ENCODE measurements at regions of chr11 and their contacts with region 1.

Region 1: GRCh38 chr11:13668102-13668956 is at the start of gene FAR1:
- DNase-seq: peak; percentile 93
- ATAC-seq: peak; percentile 91
- H3K4me3 Mint-ChIP-seq: peak within 1 kb of the TSS; percentile 99
- H3K27ac Mint-ChIP-seq: peak within 1 kb of the TSS; percentile 95
- H3K4me1 Mint-ChIP-seq: peaks cover 44% of the 10 kb centered on the region
- H3K27me3 Mint-ChIP-seq: peaks cover 7% of the 10 kb centered on the region
- CTCF ChIP-seq: no peak
- total RNA-seq, gene FAR1: 39.2 and 48.4 TPM in 2 replicates

Region 2: GRCh38 chr11:13462901-13463778 is 205.2 kb before region 1 on chr11 and contains the start of gene BTBD10:
- CTCF ChIA-PET with region 1: no interaction called
- POLR2A ChIA-PET with region 1: interaction called, 21 read pairs
- intact Hi-C with region 1: loop called (anchors 1 kb)
- DNase-seq: peak; percentile 91
- ATAC-seq: peak; percentile 98
- H3K4me3 Mint-ChIP-seq: peak within 1 kb of the TSS; percentile 98
- H3K27ac Mint-ChIP-seq: peak within 1 kb of the TSS; percentile 95
- H3K4me1 Mint-ChIP-seq: peaks cover 43% of the 10 kb centered on the region
- H3K27me3 Mint-ChIP-seq: no peaks in the 10 kb centered on the region
- CTCF ChIP-seq: no peak
- total RNA-seq, gene BTBD10: 18.8 and 25.1 TPM in 2 replicates

Region 3: GRCh38 chr11:13680501-13681264 is 12.4 kb after region 1 on chr11:
- CTCF ChIA-PET with region 1: interaction called, 3 read pairs
- POLR2A ChIA-PET with region 1: interaction called, 4 read pairs
- intact Hi-C with region 1: loop called (anchors 1 kb)
- DNase-seq: no peak
- ATAC-seq: peak; percentile 74
- H3K4me3 Mint-ChIP-seq: no peak overlapping the region
- H3K27ac Mint-ChIP-seq: peak overlapping the region; percentile 85
- H3K4me1 Mint-ChIP-seq: peaks cover 42% of the 10 kb centered on the region
- H3K27me3 Mint-ChIP-seq: no peaks in the 10 kb centered on the region
- CTCF ChIP-seq: no peak

Region 4: DNA sequence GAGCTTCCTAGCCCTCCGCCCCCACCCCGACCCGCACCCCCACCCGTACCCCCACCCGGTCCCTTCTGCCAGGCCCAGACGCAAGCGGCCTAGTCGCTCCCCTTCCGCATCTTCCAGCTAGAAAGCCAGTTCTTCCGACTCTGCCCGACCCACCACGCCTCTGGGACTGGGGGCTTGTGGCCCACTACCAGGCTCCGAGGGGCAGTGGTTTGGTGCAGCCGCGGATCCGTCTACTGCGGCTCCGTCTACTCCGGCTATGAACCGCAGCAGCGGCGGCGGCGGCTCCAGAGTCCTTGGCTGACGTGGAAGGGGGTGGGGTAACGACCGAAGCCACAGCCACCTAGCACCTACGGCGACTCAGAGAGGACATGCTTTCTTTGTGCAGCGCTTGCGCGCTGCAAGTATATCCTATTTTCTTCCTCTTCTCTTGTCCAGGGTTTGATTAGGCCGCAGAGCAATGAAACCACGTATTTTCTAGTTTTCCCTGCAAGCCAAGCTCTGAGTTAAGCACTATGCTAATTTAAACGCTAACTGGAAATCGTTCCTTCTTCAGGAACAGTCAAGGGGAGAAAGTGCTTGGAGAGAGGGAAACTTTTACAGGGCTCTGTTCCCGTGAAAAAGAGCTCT is 831.3 kb after region 1 on chr11 and contains the start of gene COPB1:
- CTCF ChIA-PET with region 1: no interaction called
- POLR2A ChIA-PET with region 1: no interaction called
- intact Hi-C with region 1: loop called (anchors 1 kb)
- DNase-seq: peak; percentile 81
- ATAC-seq: peak; percentile 95
- H3K4me3 Mint-ChIP-seq: peak within 1 kb of the TSS; percentile 100
- H3K27ac Mint-ChIP-seq: peak within 1 kb of the TSS; percentile 96
- H3K4me1 Mint-ChIP-seq: peaks cover 41% of the 10 kb centered on the region
- H3K27me3 Mint-ChIP-seq: no peaks in the 10 kb centered on the region
- CTCF ChIP-seq: no peak
- total RNA-seq, gene COPB1: 80.7 and 90.1 TPM in 2 replicates

Region 5: GRCh38 chr11:15113381-15113780 is 1445.1 kb after region 1 on chr11:
- CTCF ChIA-PET with region 1: no interaction called
- POLR2A ChIA-PET with region 1: no interaction called
- intact Hi-C with region 1: loop called (anchors 10 kb)
- DNase-seq: peak; percentile 54
- ATAC-seq: peak; percentile 94
- H3K4me3 Mint-ChIP-seq: peak overlapping the region; percentile 70
- H3K27ac Mint-ChIP-seq: peak overlapping the region; percentile 79
- H3K4me1 Mint-ChIP-seq: peaks cover 77% of the 10 kb centered on the region
- H3K27me3 Mint-ChIP-seq: peaks cover 13% of the 10 kb centered on the region
- CTCF ChIP-seq: no peak